Colonic mucosa (tissue), 4 donors: ENCODE measurements at regions of chr3 and their contacts with region 1.

Region 1: DNA sequence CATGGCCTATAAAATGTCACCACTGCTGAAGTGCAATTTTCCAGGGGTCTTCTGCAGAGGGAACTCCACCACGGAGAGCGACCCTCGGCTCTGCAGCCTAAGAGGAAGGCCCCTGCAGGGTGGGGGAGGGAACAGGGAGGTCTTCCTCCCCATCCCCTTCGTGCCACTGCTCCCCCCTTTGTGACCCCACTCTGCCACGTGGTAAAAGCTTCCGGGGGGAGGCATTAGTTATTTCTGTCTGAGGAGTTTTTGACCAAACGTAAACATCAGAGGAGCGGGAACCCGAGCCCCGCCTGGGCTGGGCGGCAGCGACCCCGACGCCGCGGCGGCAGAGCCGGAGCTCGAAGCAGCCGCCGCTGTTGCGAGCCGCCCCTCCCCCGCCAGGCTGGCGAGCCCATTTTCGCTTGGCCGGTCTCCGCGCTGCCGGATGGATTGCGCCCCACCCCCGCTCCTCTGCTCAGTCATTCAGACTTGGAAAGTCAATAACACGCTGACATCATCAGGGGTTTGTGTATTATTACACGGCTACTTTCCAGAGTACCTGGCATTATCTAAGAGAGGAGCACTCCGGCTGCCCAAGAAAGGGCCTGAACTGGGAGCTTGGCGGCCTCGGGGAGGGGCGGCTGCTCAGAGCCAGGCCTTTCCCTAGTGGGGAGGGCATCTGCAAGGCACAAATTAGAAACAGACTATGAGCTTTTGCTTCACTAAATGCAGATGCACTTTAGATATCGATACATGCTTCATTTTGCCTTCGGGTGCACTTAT is 162.5 kb upstream of the TBL1XR1 start:
- DNase-seq: peak; percentile 95
- H3K4me3 ChIP-seq: peak overlapping the region; percentile 21
- H3K27ac ChIP-seq: peak overlapping the region; percentile 96
- H3K4me1 ChIP-seq: peaks cover 18% of the 10 kb centered on the region
- H3K27me3 ChIP-seq: no peaks in the 10 kb centered on the region
- CTCF ChIP-seq: no peak

Region 2: DNA sequence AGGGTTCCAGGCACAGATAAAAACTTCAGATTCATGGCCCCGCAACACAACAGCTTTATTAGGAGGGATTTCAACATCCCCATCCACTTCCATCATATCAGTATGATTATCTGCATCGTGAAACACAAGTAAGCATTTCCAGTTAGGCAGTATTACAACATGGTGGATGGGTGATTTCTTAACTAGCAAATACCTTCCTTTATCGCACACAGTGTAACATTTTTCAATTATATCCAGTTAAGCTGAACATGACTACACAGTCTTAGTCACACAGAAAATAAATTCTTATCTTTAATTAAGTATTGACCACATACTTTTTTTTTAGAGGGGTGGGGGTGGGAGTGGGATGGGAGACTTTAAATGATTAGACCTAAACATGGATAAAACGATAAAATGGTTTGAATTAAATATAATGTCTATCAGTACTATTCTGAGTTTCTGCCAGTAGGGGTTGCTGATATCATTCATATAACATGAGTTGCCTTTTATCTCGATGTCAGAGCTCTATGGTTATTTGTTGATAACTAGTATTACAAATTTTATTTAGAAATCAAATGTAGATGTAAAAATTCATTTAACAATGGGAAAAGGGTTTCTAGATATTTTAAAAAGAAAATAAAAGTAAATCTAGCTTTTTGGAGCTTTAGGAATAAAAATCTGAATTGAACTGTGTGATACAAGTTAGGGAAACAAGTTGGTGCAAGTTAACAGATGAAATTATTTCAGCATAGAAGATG is 309.1 kb before region 1 on chr3:
- intact Hi-C with region 1: loop called (anchors 10 kb)
- DNase-seq: no peak
- H3K4me3 ChIP-seq: no peak overlapping the region
- H3K27ac ChIP-seq: no peak overlapping the region
- H3K4me1 ChIP-seq: no peaks in the 10 kb centered on the region
- H3K27me3 ChIP-seq: no peaks in the 10 kb centered on the region
- CTCF ChIP-seq: peak; percentile 27

Region 3: GRCh38 chr3:177294221-177294620 is 65.6 kb before region 1 on chr3:
- intact Hi-C with region 1: loop called (anchors 5 kb)
- DNase-seq: no peak
- H3K4me3 ChIP-seq: no peak overlapping the region
- H3K27ac ChIP-seq: peak overlapping the region; percentile 92
- H3K4me1 ChIP-seq: no peaks in the 10 kb centered on the region
- H3K27me3 ChIP-seq: no peaks in the 10 kb centered on the region
- CTCF ChIP-seq: no peak

Region 4: DNA sequence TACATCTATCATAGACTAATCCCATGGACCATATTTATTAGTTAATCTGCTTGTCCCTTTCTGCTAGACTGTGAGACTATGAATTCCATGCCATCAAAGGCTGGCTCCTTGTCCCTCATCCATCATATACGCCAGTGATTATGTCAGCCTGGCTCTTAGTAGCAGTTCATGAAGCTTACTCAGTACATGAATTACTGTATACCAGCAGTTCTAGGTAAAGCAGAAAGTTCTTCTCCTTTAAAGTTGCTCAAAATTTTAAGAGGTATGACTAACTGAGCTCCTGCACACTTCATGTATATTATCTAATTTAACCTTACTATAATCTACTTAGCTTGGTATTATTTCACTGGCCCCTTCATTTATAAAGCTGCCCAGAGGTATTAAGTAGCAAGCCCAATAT is 28.4 kb after region 1 on chr3:
- intact Hi-C with region 1: no loop called
- DNase-seq: no peak
- H3K4me3 ChIP-seq: no peak overlapping the region
- H3K27ac ChIP-seq: no peak overlapping the region
- H3K4me1 ChIP-seq: no peaks in the 10 kb centered on the region
- H3K27me3 ChIP-seq: no peaks in the 10 kb centered on the region
- CTCF ChIP-seq: no peak